Colonic mucosa (tissue), 4 donors: ENCODE measurements at regions of chr11 and their contacts with region 1.

Region 1: GRCh38 chr11:2975594-2975993 is 16.5 kb downstream of the NAP1L4 start:
- DNase-seq: no peak
- H3K4me3 ChIP-seq: no peak overlapping the region
- H3K27ac ChIP-seq: no peak overlapping the region
- H3K4me1 ChIP-seq: no peaks in the 10 kb centered on the region
- H3K27me3 ChIP-seq: no peaks in the 10 kb centered on the region
- CTCF ChIP-seq: peak; percentile 41

Region 2: GRCh38 chr11:2511421-2512369 is 463.9 kb before region 1 on chr11:
- intact Hi-C with region 1: no loop called
- DNase-seq: peak; percentile 15
- H3K4me3 ChIP-seq: no peak overlapping the region
- H3K27ac ChIP-seq: no peak overlapping the region
- H3K4me1 ChIP-seq: no peaks in the 10 kb centered on the region
- H3K27me3 ChIP-seq: no peaks in the 10 kb centered on the region
- CTCF ChIP-seq: no peak

Region 3: GRCh38 chr11:2664791-2665525 is 310.6 kb before region 1 on chr11:
- intact Hi-C with region 1: no loop called
- DNase-seq: no peak
- H3K4me3 ChIP-seq: no peak overlapping the region
- H3K27ac ChIP-seq: no peak overlapping the region
- H3K4me1 ChIP-seq: no peaks in the 10 kb centered on the region
- H3K27me3 ChIP-seq: no peaks in the 10 kb centered on the region
- CTCF ChIP-seq: no peak

Region 4: DNA sequence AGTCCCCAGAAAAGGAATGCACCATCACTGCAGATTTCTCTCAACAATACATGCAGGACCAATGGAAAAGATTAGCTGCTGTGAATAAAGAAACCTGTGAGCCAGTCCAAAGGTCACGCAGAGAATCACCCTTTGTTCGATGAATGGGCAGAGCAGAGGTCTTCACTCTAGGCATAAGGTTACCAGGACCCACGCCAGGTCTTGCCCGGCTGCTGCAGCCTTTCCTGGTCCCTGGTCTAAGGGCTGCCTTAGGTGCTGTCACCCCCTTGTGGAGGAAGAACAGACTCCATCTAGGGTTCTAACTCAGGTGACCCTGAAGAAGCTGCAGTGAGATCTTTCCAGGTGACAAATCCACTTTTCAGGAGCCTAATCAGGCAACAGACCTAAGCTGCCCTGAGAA is 45.5 kb after region 1 on chr11:
- intact Hi-C with region 1: loop called (anchors 5 kb)
- DNase-seq: peak; percentile 44
- H3K4me3 ChIP-seq: no peak overlapping the region
- H3K27ac ChIP-seq: no peak overlapping the region
- H3K4me1 ChIP-seq: no peaks in the 10 kb centered on the region
- H3K27me3 ChIP-seq: no peaks in the 10 kb centered on the region
- CTCF ChIP-seq: peak; percentile 55

Region 5: GRCh38 chr11:3037040-3037944 is 61.7 kb after region 1 on chr11:
- intact Hi-C with region 1: no loop called
- DNase-seq: peak; percentile 85
- H3K4me3 ChIP-seq: no peak overlapping the region
- H3K27ac ChIP-seq: no peak overlapping the region
- H3K4me1 ChIP-seq: no peaks in the 10 kb centered on the region
- H3K27me3 ChIP-seq: no peaks in the 10 kb centered on the region
- CTCF ChIP-seq: peak; percentile 58

Region 6: DNA sequence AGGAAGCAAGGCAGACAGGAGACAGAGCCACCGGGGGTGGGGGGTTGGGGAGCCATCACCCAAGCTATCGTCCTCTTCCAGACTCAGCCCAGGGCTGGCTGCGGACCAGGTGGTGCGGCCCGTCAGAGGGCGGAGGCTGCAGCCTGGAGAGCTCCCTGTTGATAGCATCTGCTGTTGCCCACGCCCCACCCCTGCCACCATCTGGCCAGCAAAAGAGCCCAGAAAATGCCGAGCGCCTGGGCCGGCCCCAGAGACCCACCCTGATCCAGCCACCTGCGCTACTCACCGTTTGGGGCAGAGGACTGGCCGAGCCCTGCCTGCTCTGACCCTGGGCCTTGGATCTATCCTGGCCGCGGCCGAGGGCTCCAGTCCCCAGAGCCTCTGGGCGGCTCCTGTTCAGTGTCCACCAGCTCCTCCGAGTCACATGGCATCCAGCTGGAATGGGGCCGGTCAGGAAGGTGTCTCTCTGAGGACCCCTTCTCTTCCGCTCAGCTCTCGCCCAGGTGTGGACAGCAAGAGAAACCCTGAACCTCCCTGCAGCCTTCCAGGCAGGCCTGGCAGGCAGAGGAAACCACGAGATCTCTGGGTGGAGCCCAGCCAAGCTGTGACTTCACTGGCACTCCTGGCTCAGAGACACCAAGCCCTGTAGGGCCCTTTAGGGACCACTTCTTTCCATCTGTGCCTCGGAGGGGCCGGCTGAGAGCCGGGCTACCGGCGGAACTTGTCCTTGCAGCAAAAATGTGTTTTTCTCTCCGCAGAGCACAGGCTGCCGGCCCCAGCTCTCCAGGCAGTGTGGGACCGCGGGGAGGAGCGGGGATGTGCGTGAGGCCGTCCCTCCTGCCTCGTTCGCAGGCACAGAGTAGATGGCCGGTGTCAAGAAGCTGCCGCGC is 256.5 kb after region 1 on chr11 and contains the start of gene MRGPRE:
- intact Hi-C with region 1: no loop called
- DNase-seq: no peak
- H3K4me3 ChIP-seq: no peak within 1 kb of the TSS
- H3K27ac ChIP-seq: no peak within 1 kb of the TSS
- H3K4me1 ChIP-seq: no peaks in the 10 kb centered on the region
- H3K27me3 ChIP-seq: no peaks in the 10 kb centered on the region
- CTCF ChIP-seq: no peak
- total RNA-seq, gene MRGPRE: not detected